ENCODE measurements at regions of chrX and their contacts with region 1.

Region 1: GRCh38 chrX:71420686-71421085 is 54.5 kb downstream of the TAF1 start:
- DNase-seq: no peak
- ATAC-seq: no peak
- H3K4me3 ChIP-seq: no peak overlapping the region
- H3K4me3 Mint-ChIP-seq: no peak overlapping the region
- H3K27ac ChIP-seq: no peak overlapping the region
- H3K27ac Mint-ChIP-seq: no peak overlapping the region
- H3K4me1 ChIP-seq: no peaks in the 10 kb centered on the region
- H3K4me1 Mint-ChIP-seq: no peaks in the 10 kb centered on the region
- H3K27me3 ChIP-seq: no peaks in the 10 kb centered on the region
- H3K27me3 Mint-ChIP-seq: no peaks in the 10 kb centered on the region
- CTCF ChIP-seq: no peak

Region 2: GRCh38 chrX:71550578-71550977 is 129.9 kb after region 1 on chrX:
- CTCF ChIA-PET with region 1: no interaction called
- POLR2A ChIA-PET with region 1: no interaction called
- intact Hi-C with region 1: loop called in 1 of 2 experiments (anchors 10 kb)
- DNase-seq: no peak
- ATAC-seq: no peak
- H3K4me3 ChIP-seq: no peak overlapping the region
- H3K4me3 Mint-ChIP-seq: no peak overlapping the region
- H3K27ac ChIP-seq: no peak overlapping the region
- H3K27ac Mint-ChIP-seq: peak overlapping the region; percentile 10
- H3K4me1 ChIP-seq: peaks cover 2% of the 10 kb centered on the region
- H3K4me1 Mint-ChIP-seq: peaks cover 35% of the 10 kb centered on the region
- H3K27me3 ChIP-seq: no peaks in the 10 kb centered on the region
- H3K27me3 Mint-ChIP-seq: no peaks in the 10 kb centered on the region
- CTCF ChIP-seq: no peak

Region 3: GRCh38 chrX:71565474-71566041 is 144.9 kb after region 1 on chrX:
- CTCF ChIA-PET with region 1: no interaction called
- POLR2A ChIA-PET with region 1: no interaction called
- intact Hi-C with region 1: loop called in 1 of 2 experiments (anchors 10 kb)
- DNase-seq: no peak
- ATAC-seq: no peak
- H3K4me3 ChIP-seq: no peak overlapping the region
- H3K4me3 Mint-ChIP-seq: no peak overlapping the region
- H3K27ac ChIP-seq: no peak overlapping the region
- H3K27ac Mint-ChIP-seq: no peak overlapping the region
- H3K4me1 ChIP-seq: no peaks in the 10 kb centered on the region
- H3K4me1 Mint-ChIP-seq: peaks cover 15% of the 10 kb centered on the region
- H3K27me3 ChIP-seq: no peaks in the 10 kb centered on the region
- H3K27me3 Mint-ChIP-seq: no peaks in the 10 kb centered on the region
- CTCF ChIP-seq: no peak